Calu3 (cell line): ENCODE measurements at regions of chr2 and their contacts with region 1.

Region 1: DNA sequence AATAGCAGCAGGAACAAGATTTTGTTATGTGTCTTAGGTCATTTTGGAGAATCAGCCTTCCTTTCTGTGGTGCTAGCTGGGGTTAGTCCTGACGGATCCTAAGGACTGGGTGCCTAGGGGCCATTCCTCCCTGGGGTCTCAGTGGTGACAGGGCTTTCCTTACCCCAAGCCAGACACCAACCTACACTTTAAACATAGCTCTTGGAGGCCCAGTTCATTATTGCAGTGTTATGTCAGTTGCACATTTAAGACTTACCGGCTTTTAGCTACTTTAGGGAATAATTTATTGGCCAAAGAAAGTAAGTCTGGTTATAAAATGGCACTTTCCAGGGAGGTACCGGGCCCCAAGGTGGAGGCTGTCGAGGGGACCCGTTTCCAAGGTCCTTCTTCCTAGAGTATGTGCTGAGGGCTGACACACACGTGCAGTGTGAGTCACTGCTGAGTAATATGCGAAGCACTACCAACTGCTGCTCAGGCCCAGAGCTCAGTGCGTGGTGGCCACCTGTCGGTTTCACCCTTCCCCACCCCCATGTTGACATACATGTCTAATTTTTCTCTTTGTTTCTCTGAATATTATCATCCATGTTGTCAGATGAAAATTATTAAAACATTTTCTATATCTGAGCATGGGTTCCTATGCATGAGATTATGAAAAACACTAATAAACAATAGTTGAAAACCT is 37.0 kb upstream of the GRHL1 start:
- DNase-seq: peak; percentile 75
- H3K4me3 Mint-ChIP-seq: no peak overlapping the region
- H3K27ac Mint-ChIP-seq: peak overlapping the region; percentile 48
- H3K4me1 Mint-ChIP-seq: peaks cover 21% of the 10 kb centered on the region
- H3K27me3 Mint-ChIP-seq: no peaks in the 10 kb centered on the region
- CTCF ChIP-seq: peak; percentile 40

Region 2: DNA sequence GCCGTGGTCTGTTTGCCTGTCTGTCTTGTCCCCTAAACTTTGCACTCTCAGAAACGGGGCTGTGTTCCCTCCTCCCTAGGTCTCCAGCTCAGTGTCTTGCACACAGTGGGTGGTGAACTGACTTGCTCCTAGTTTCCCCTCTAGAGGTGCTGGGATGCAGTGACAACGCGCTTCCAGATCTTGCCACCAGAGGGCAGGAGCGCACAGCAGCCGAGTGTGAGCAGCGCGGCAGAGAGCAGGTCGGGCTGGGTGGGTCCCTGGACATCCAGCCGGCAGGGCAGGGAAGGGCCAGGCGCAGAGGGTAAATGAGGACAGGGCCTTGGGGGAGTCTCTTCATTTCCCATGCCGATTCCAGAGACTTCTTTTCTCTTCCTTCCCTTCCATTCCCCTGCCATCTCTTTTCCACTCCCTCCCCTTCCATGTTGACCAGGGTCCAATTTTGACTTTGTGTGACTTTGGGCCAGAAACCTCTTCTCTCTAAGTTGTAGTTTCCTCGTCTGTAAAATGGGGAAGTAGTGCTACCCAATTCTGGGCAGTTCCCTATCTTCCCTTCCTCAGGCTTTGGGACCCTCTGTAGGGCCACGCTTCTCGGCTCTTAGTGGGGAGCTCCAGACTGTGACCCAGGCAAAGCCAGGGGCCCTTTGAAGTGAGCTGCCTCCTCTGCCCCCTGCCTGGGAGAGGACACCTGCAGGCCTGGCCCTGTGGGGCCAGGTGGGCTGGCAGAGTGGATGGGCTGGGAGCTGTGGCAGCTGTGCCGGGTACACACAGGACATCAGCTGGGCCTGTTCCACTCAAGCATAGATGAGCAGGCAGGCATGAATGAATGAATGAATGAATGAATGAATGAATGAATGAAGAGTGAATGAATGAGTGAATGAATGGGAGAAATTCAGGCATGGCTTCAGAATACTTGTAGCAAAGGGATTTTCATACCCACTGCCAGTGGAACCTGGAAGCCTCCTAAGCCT is 114.6 kb before region 1 on chr2:
- CTCF ChIA-PET with region 1: interaction called, 6 read pairs
- intact Hi-C with region 1: loop called (anchors 1 kb)
- DNase-seq: peak; percentile 95
- H3K4me3 Mint-ChIP-seq: peak overlapping the region; percentile 50
- H3K27ac Mint-ChIP-seq: peak overlapping the region; percentile 85
- H3K4me1 Mint-ChIP-seq: peaks cover 49% of the 10 kb centered on the region
- H3K27me3 Mint-ChIP-seq: no peaks in the 10 kb centered on the region
- CTCF ChIP-seq: peak; percentile 93

Region 3: GRCh38 chr2:9813312-9814133 is 101.0 kb before region 1 on chr2:
- CTCF ChIA-PET with region 1: interaction called, 7 read pairs
- intact Hi-C with region 1: loop called (anchors 2 kb)
- DNase-seq: peak; percentile 83
- H3K4me3 Mint-ChIP-seq: no peak overlapping the region
- H3K27ac Mint-ChIP-seq: no peak overlapping the region
- H3K4me1 Mint-ChIP-seq: peaks cover 40% of the 10 kb centered on the region
- H3K27me3 Mint-ChIP-seq: no peaks in the 10 kb centered on the region
- CTCF ChIP-seq: peak; percentile 90

Region 4: DNA sequence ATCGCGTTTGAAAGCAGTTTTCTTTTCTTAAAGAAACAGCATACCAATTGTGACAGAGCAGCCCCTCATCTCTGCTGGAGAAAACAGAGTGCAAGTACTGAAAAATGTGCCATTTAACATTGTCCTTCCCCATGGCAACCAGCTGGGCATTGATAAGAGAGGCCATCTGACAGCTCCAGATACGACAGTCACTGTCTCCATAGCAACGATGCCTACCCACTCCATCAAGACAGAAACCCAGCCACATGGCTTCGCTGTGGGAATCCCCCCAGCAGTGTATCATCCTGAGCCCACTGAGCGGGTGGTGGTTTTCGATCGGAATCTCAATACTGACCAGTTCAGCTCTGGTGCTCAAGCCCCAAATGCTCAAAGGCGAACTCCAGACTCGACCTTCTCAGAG is 46.5 kb after region 1 on chr2:
- CTCF ChIA-PET with region 1: no interaction called
- intact Hi-C with region 1: no loop called
- DNase-seq: no peak
- H3K4me3 Mint-ChIP-seq: no peak overlapping the region
- H3K27ac Mint-ChIP-seq: no peak overlapping the region
- H3K4me1 Mint-ChIP-seq: no peaks in the 10 kb centered on the region
- H3K27me3 Mint-ChIP-seq: no peaks in the 10 kb centered on the region
- CTCF ChIP-seq: no peak